ENCODE measurements at regions of chrX and their contacts with region 1.

Region 1: GRCh38 chrX:154370882-154371770 is 3.3 kb downstream of the FLNA start:
- DNase-seq: peak; percentile 88
- ATAC-seq: peak; percentile 65
- H3K4me3 Mint-ChIP-seq: peak overlapping the region; percentile 83
- H3K27ac Mint-ChIP-seq: peak overlapping the region; percentile 67
- H3K4me1 Mint-ChIP-seq: peaks cover 10% of the 10 kb centered on the region
- H3K27me3 Mint-ChIP-seq: no peaks in the 10 kb centered on the region

Region 2: GRCh38 chrX:154317391-154317995 is 53.6 kb before region 1 on chrX:
- POLR2A ChIA-PET with region 1: no interaction called
- DNase-seq: no peak
- ATAC-seq: no peak
- H3K4me3 Mint-ChIP-seq: no peak overlapping the region
- H3K27ac Mint-ChIP-seq: no peak overlapping the region
- H3K4me1 Mint-ChIP-seq: peaks cover 38% of the 10 kb centered on the region
- H3K27me3 Mint-ChIP-seq: no peaks in the 10 kb centered on the region

Region 3: DNA sequence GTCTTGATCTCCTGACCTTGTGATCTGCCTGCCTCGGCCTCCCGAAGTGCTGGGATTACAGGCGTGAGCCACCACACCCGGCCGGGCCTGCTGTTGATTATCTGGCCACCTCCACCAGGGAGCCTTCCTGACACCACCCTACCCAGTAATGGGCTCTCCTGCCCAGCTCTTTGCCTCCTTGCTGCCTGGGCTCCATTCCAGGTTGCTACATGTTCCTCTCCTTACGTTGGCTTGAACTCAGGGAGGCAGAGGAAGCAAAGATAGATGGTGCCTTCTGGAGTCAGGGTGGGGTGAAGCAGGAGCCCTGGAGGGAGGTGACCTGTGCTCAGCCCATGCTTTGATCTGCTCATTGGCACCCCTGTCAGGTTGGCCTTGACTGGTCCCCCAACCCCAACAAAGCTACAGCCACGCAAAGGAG is 23.0 kb before region 1 on chrX:
- POLR2A ChIA-PET with region 1: interaction called, 13 read pairs
- DNase-seq: no peak
- ATAC-seq: no peak
- H3K4me3 Mint-ChIP-seq: no peak overlapping the region
- H3K27ac Mint-ChIP-seq: peak overlapping the region; percentile 78
- H3K4me1 Mint-ChIP-seq: peaks cover 20% of the 10 kb centered on the region
- H3K27me3 Mint-ChIP-seq: no peaks in the 10 kb centered on the region

Region 4: GRCh38 chrX:154419732-154420364 is 48.7 kb after region 1 on chrX:
- POLR2A ChIA-PET with region 1: no interaction called
- DNase-seq: no peak
- ATAC-seq: no peak
- H3K4me3 Mint-ChIP-seq: no peak overlapping the region
- H3K27ac Mint-ChIP-seq: no peak overlapping the region
- H3K4me1 Mint-ChIP-seq: peaks cover 5% of the 10 kb centered on the region
- H3K27me3 Mint-ChIP-seq: no peaks in the 10 kb centered on the region